A549 (cell line): ENCODE measurements at regions of chr16 and their contacts with region 1.

Region 1: GRCh38 chr16:72124761-72125634 is 31.4 kb downstream of the DHX38 start:
- DNase-seq: peak; percentile 69 to 74
- ATAC-seq: peak; percentile 88 to 97
- H3K4me3 ChIP-seq: no peak overlapping the region
- H3K27ac ChIP-seq: no peak overlapping the region
- H3K4me1 ChIP-seq: no peaks in the 10 kb centered on the region
- CTCF ChIP-seq: peak; percentile 82
- EP300 ChIP-seq: no peak
- POLR2A ChIP-seq: no peak
- RAD21 ChIP-seq: peak; percentile 87 to 90

Region 2: DNA sequence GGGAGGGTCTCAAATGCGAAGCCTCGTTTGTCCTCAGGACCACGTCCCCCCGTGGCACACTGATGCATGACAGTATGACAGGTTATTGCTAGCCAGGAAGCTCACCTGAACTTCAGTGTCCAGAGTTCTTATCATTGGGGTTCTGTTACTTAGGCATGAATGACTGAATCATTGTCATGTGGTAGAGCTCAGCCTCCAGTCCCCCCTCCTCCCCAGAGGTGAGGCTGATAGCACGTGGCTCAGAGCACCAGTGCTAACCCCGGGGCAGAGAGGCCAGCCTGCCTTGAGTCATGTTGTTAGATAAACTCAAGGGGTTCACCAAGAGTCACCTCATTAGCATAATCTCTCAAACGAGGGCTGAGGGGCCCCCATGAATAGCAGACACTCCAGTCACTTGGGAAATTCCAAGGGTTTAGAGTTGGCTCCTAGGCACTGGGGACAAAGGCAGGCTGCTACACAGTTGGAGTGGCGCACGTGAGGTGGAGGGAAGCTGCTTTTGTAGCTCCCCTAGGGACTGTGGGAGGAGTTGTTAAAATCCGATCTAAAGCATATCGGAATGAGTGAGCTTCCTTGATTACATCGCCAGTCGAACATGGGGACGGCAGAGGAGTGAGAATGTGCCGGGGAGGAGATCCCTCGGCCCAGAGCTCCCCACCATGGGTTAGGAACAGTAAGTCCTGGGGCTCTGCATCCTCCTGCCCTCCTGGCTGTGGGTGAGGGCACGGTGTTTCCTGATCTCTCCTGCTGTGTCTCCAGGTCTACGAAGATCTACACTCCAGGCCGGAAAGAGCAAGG is 13.1 kb before region 1 on chr16:
- CTCF ChIA-PET with region 1: interaction called, 11 read pairs
- POLR2A ChIA-PET with region 1: no interaction called
- DNase-seq: no peak
- ATAC-seq: peak in 1 of 2 experiments; percentile 22; a peak in 1 of 6 replicates
- H3K4me3 ChIP-seq: no peak overlapping the region
- H3K27ac ChIP-seq: no peak overlapping the region
- H3K4me1 ChIP-seq: no peaks in the 10 kb centered on the region
- CTCF ChIP-seq: no peak
- EP300 ChIP-seq: no peak
- POLR2A ChIP-seq: no peak
- RAD21 ChIP-seq: no peak

Region 3: DNA sequence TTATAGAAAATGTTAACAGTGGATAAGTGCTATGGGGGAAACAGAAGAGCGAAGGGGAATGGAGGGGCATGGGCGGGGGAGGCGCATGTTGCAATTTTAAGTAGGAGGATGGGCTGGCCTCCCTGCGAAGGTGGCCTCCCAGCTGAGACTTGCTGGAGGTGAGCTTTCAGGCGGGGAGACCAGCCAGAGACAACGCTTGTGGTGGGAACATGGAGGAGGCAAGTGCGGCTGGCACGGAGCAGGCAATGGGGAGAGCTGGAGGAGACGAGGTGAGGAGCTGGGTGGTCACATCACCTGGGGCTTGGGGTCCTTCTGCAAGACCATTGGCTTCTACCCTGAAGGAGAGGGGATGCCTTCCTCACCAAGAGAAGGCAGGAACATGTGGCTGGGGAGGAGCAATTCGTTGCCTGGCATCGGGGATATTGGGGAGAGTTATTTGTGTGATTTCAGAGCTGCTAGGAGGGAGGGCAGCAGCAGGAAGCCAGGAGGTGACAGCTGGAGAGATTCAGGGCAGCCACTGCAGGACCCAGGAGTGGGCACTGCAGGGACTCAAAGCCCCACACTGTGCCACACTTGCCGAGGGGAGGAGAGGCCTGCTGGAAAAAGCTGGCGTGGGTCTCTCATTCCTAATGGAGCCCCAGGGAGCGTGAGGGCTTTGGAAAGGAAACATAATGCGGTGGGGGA is 12.5 kb after region 1 on chr16:
- CTCF ChIA-PET with region 1: interaction called, 15 read pairs
- POLR2A ChIA-PET with region 1: no interaction called
- DNase-seq: no peak
- ATAC-seq: no peak
- H3K4me3 ChIP-seq: no peak overlapping the region
- H3K27ac ChIP-seq: no peak overlapping the region
- H3K4me1 ChIP-seq: no peaks in the 10 kb centered on the region
- CTCF ChIP-seq: no peak
- EP300 ChIP-seq: no peak
- POLR2A ChIP-seq: no peak
- RAD21 ChIP-seq: no peak

Region 4: DNA sequence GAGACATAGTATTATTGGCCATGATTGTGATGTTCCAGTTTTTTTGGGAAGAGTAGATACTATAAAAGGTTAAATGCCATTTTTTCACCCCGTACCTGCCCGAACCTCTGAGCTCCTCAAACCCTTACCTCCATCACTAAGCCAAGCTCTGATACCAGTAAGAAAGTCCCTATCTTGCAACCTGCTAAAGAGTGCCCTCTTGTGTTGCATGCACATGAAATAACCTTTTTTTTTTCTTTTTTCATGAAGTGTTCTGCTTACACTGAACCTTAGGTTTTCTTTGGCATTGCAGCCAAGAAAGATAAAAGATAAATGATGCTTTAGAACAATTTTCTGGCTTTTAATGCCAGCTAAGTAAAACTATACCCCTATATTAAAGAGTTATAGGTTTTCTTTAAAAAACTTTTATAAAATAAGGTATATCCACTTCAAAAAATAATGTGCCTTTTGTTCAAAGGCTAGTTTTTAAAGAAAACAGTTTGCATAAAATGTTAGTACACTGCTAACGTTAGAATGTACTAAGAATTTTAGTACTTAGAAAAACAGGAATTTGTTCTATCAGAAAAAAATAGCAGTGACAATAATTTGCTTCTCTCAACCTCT is 342.3 kb after region 1 on chr16:
- CTCF ChIA-PET with region 1: interaction called, 18 read pairs
- POLR2A ChIA-PET with region 1: no interaction called
- DNase-seq: peak; percentile 2 to 57
- ATAC-seq: peak; percentile 73 to 82; a peak in 5 of 6 replicates
- H3K4me3 ChIP-seq: no peak overlapping the region
- H3K27ac ChIP-seq: no peak overlapping the region
- H3K4me1 ChIP-seq: no peaks in the 10 kb centered on the region
- CTCF ChIP-seq: peak; percentile 78
- EP300 ChIP-seq: no peak
- POLR2A ChIP-seq: no peak
- RAD21 ChIP-seq: peak; percentile 81 to 83

Region 5: DNA sequence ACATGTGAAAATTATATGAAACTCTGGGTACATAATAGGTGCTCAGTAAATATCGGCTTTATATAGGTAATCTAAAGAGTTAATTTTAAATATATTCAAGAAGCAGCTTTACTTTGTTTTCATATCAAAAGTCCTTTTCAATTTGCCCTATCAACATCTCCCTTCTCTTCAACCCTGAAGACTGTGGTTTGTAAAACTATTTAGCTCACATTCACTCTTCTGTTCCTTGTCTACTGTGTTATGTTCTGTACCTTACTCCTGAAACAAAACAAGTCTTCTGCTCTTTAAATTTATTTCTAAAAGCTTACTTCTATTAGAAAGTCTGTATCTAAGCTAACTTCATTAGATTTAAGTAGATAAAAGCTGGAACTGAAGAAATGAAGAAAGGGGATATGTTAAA is 348.6 kb after region 1 on chr16:
- CTCF ChIA-PET with region 1: interaction called, 18 read pairs
- POLR2A ChIA-PET with region 1: no interaction called
- DNase-seq: no peak
- ATAC-seq: no peak
- H3K4me3 ChIP-seq: no peak overlapping the region
- H3K27ac ChIP-seq: no peak overlapping the region
- H3K4me1 ChIP-seq: no peaks in the 10 kb centered on the region
- CTCF ChIP-seq: no peak
- EP300 ChIP-seq: no peak
- POLR2A ChIP-seq: no peak
- RAD21 ChIP-seq: no peak

Region 6: GRCh38 chr16:73956587-73957494 is 1831.8 kb after region 1 on chr16:
- CTCF ChIA-PET with region 1: interaction called, 10 read pairs
- POLR2A ChIA-PET with region 1: no interaction called
- DNase-seq: peak; percentile 37 to 52
- ATAC-seq: peak; percentile 66 to 79; a peak in 4 of 6 replicates
- H3K4me3 ChIP-seq: no peak overlapping the region
- H3K27ac ChIP-seq: no peak overlapping the region
- H3K4me1 ChIP-seq: no peaks in the 10 kb centered on the region
- CTCF ChIP-seq: peak; percentile 86
- EP300 ChIP-seq: no peak
- POLR2A ChIP-seq: no peak
- RAD21 ChIP-seq: peak; percentile 72 to 74